ENCODE measurements at regions of chr2 and their contacts with region 1.

Region 1: DNA sequence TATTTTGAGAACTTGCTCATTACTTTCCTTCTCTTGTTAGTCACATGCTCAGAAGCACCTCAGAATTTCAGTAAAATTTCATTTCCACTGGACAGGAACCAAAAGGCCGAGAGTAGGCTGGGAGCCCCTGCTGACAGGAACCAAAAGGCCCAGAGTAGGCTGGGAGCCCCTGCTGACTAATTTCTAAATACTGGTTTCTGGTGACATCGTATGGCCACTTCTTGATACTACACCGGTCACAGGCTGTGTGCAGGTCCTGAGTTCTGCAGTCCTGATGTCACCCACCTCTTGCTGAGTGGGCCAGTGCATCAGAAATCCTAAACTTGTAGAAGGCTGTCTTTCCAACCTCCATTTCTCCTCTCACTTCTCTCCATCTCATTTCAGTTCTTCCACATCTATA is 17.7 kb upstream of the EN1 start:
- DNase-seq: peak in 2 of 9 experiments; percentile 45 to 55
- ATAC-seq: peak; percentile 55
- H3K4me3 ChIP-seq: no peak overlapping the region
- H3K4me3 Mint-ChIP-seq: no peak overlapping the region
- H3K27ac ChIP-seq: no peak overlapping the region
- H3K27ac Mint-ChIP-seq: no peak overlapping the region
- H3K4me1 ChIP-seq: no peaks in the 10 kb centered on the region
- H3K4me1 Mint-ChIP-seq: no peaks in the 10 kb centered on the region
- H3K27me3 ChIP-seq: peaks cover 0 to under 1% of the 10 kb centered on the region in 2 experiments
- H3K27me3 Mint-ChIP-seq: peaks cover 34% of the 10 kb centered on the region
- CTCF ChIP-seq: peak; percentile 31

Region 2: DNA sequence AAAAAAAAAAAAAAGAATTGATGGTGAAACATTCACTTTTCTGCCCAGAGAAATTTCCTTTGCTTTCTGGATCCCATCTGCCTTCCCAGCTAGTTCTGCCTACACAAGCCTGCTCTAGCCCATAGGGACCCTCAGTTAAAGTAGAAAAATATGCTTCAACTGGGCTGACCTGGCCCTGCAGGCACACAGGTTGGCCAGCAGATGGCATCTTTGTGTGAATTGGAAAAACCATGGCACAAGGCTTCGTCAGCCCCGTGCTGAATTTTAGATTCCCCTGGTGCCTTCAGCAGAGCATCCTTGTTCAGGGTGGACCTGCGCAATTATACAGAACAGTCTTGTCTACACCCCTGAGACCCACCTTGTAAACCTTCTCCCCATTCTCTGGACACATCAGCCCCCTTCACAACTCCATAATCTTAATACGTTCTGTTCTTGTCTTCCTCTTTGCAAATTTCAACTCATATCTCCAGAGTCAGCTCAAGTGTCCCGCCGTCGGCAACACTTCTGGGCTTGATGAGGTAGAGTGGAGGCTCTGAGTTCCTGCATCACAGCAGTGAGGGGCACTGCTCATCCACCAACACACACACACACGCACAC is 662.3 kb before region 1 on chr2:
- CTCF ChIA-PET with region 1: interaction called, 3 read pairs
- POLR2A ChIA-PET with region 1: no interaction called
- intact Hi-C with region 1: loop called in 1 of 2 experiments (anchors 1 kb)
- DNase-seq: peak in 8 of 9 experiments; percentile 24 to 71 (median 54)
- ATAC-seq: peak; percentile 92
- H3K4me3 ChIP-seq: no peak overlapping the region
- H3K4me3 Mint-ChIP-seq: peak overlapping the region; percentile 0
- H3K27ac ChIP-seq: no peak overlapping the region
- H3K27ac Mint-ChIP-seq: no peak overlapping the region
- H3K4me1 ChIP-seq: no peaks in the 10 kb centered on the region
- H3K4me1 Mint-ChIP-seq: peaks cover 5% of the 10 kb centered on the region
- H3K27me3 ChIP-seq: no peaks in the 10 kb centered on the region
- H3K27me3 Mint-ChIP-seq: peaks cover 26% of the 10 kb centered on the region
- CTCF ChIP-seq: peak; percentile 77

Measured in CD8-positive, alpha-beta T cell (primary cell).